CD8-positive, alpha-beta T cell (primary cell): ENCODE measurements at regions of chr19 and their contacts with region 1.

Region 1: GRCh38 chr19:58408152-58409009 is at the start of gene ZNF584:
- DNase-seq: peak; percentile 80 to 96 (median 93)
- ATAC-seq: peak; percentile 97
- H3K4me3 ChIP-seq: peak within 1 kb of the TSS; percentile 75 to 79
- H3K4me3 Mint-ChIP-seq: peak within 1 kb of the TSS; percentile 97
- H3K27ac ChIP-seq: peak within 1 kb of the TSS; percentile 67 to 85
- H3K27ac Mint-ChIP-seq: peak within 1 kb of the TSS; percentile 96
- H3K4me1 ChIP-seq: peaks cover 22% of the 10 kb centered on the region
- H3K4me1 Mint-ChIP-seq: peaks cover 33% of the 10 kb centered on the region
- H3K27me3 ChIP-seq: no peaks in the 10 kb centered on the region
- H3K27me3 Mint-ChIP-seq: no peaks in the 10 kb centered on the region
- CTCF ChIP-seq: no peak
- total RNA-seq, gene ZNF584: 1.2 to 1.7 TPM

Region 2: GRCh38 chr19:57914531-57914930 is 493.9 kb before region 1 on chr19:
- CTCF ChIA-PET with region 1: no interaction called
- POLR2A ChIA-PET with region 1: no interaction called
- intact Hi-C with region 1: loop called in 1 of 2 experiments (anchors 10 kb)
- DNase-seq: no peak
- ATAC-seq: no peak
- H3K4me3 ChIP-seq: no peak overlapping the region
- H3K4me3 Mint-ChIP-seq: peak overlapping the region; percentile 92
- H3K27ac ChIP-seq: no peak overlapping the region
- H3K27ac Mint-ChIP-seq: peak overlapping the region; percentile 49
- H3K4me1 ChIP-seq: peaks cover 12% of the 10 kb centered on the region
- H3K4me1 Mint-ChIP-seq: peaks cover 43% of the 10 kb centered on the region
- H3K27me3 ChIP-seq: no peaks in the 10 kb centered on the region
- H3K27me3 Mint-ChIP-seq: no peaks in the 10 kb centered on the region
- CTCF ChIP-seq: no peak

Region 3: DNA sequence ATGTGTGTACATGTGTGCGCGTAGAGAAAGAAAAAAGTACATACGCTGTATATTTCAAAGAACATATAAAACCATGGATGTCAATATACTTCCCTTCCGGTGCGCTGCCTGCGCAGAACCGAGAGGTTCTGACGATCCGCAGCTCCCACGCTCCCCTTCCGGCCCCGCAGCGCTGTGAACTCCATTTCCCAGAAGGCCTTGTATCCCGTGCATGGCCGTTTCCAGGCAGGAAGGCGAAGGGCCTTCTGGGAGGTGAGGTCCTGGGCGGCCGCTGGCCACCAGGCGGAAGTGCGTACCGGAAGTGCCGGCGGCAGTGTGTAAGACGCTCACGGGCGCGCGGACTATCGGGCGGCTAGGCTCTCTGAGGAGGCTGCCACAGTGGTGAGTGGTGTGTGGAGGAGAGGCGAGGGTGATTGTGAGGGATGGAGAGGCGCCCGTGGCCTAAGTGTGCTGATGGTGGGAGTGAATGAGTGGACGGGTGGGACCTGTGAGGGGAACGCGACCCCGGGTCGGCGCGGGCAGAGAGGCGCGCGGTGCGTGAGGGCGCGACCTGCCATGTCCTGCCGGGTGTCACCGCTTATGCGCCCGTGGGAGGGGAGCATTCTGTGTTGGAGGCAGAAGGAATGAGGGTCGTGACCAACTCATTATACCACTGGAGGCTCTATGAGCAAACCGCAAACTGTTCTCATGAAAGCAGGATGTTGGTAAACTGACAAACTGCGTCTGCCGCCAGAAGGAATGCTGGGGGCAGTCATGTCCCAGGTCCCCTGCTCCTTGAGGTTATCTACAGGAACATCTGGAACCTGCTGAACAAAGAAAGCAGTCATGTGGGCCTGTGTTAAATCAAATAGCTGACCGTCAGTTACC is 103.1 kb before region 1 on chr19 and contains the start of gene ERVK3-1:
- CTCF ChIA-PET with region 1: no interaction called
- POLR2A ChIA-PET with region 1: no interaction called
- intact Hi-C with region 1: loop called (anchors 1 kb)
- DNase-seq: peak; percentile 89 to 99 (median 93)
- ATAC-seq: peak; percentile 96
- H3K4me3 ChIP-seq: peak within 1 kb of the TSS; percentile 82 to 89
- H3K4me3 Mint-ChIP-seq: peak within 1 kb of the TSS; percentile 98
- H3K27ac ChIP-seq: peak within 1 kb of the TSS; percentile 93 to 95
- H3K27ac Mint-ChIP-seq: peak within 1 kb of the TSS; percentile 99
- H3K4me1 ChIP-seq: peaks cover 27% of the 10 kb centered on the region
- H3K4me1 Mint-ChIP-seq: peaks cover 53% of the 10 kb centered on the region
- H3K27me3 ChIP-seq: no peaks in the 10 kb centered on the region
- H3K27me3 Mint-ChIP-seq: no peaks in the 10 kb centered on the region
- CTCF ChIP-seq: no peak
- total RNA-seq, gene ERVK3-1: 174 to 182 TPM

Region 4: DNA sequence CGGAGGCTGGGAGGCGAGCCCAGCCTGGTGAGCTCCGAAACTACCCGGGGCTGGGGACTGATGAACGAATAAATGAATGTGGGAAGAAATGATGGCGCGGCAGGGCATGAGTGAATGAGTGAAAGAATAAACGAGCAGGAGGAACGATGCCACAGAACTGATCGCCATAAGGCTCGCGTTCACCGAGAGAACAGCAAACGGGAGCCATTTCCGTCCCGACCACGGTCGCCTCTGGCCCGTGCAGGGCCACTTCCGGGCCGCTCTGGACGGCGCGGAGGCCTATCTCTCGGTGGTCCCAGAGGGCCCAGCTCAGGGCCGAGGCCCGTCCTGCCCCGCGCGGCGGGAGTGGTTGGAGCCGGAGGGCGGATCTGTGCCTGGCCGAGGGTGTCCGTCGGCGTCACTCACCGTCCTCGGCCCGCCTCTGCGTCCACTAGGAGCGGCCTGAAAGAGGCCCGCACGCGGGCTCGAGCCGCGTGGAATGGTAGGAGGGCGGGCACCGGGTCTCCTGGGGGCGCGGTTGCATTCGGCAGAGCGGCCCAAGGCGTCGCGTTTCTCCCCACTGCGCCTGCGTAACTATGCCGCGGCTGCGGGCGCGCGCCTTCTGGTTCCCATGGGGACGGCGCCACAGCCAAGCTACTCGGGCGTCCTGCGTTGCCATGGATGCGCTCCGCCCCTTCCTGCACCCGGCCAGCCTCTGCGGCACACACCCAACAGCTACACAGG is 45.9 kb before region 1 on chr19 and contains the start of gene ZNF497:
- CTCF ChIA-PET with region 1: no interaction called
- POLR2A ChIA-PET with region 1: interaction called, 3 read pairs
- intact Hi-C with region 1: loop called (anchors 1 kb)
- DNase-seq: peak; percentile 95 to 99 (median 97)
- ATAC-seq: peak; percentile 86
- H3K4me3 ChIP-seq: peak within 1 kb of the TSS; percentile 71 to 78
- H3K4me3 Mint-ChIP-seq: peak within 1 kb of the TSS; percentile 95
- H3K27ac ChIP-seq: peak within 1 kb of the TSS; percentile 82 to 84
- H3K27ac Mint-ChIP-seq: peak within 1 kb of the TSS; percentile 92
- H3K4me1 ChIP-seq: peaks cover 18% of the 10 kb centered on the region
- H3K4me1 Mint-ChIP-seq: peaks cover 23% of the 10 kb centered on the region
- H3K27me3 ChIP-seq: no peaks in the 10 kb centered on the region
- H3K27me3 Mint-ChIP-seq: no peaks in the 10 kb centered on the region
- CTCF ChIP-seq: no peak
- total RNA-seq, gene ZNF497: 0.79 to 1.2 TPM

Region 5: DNA sequence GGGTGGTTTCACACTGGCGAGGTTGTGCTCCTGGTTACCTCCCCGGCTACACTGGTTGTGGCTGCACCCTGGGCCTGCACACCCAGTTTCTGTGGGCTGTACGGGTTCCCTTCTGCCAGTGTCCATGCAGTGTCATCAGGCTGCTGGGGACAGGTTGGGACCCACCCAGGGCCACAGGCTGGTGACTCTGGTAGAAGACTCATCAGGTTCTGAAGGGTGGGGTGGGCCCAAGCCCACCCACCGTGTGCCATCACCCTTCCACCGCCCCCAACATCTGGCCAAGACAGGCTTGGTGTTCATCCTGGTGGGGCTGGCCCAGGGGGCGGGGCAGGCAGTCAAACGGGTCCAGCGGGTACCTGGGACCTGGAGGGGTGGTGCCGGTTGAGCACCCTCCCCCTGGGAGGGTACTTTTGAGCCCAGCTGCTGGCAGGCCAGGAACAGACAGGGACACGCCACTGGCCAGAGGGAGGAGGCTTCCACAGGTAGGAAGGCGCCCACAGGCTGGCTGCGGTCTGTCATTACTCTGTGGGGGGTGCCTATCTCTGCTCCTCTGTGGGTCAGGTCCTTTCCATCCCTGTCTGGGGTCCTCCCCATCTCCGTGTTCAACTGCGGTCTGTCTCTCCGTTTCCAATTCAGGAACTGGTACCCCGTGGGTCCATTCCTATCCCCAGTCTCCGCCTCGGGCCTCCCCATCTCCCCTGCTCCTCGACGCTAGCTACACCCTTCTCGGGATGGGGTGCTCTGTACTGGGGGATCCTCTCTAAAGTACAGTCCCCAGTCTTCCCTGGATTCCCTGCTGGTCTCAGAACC is 13.0 kb before region 1 on chr19 and contains the start of gene RNF225:
- CTCF ChIA-PET with region 1: no interaction called
- POLR2A ChIA-PET with region 1: no interaction called
- intact Hi-C with region 1: no loop called
- DNase-seq: peak in 1 of 9 experiments; percentile 14
- ATAC-seq: no peak
- H3K4me3 ChIP-seq: no peak within 1 kb of the TSS
- H3K4me3 Mint-ChIP-seq: no peak within 1 kb of the TSS
- H3K27ac ChIP-seq: no peak within 1 kb of the TSS
- H3K27ac Mint-ChIP-seq: no peak within 1 kb of the TSS
- H3K4me1 ChIP-seq: peaks cover 4% of the 10 kb centered on the region
- H3K4me1 Mint-ChIP-seq: peaks cover 20% of the 10 kb centered on the region
- H3K27me3 ChIP-seq: peaks cover 4 to 5% of the 10 kb centered on the region in 2 experiments
- H3K27me3 Mint-ChIP-seq: peaks cover 10% of the 10 kb centered on the region
- CTCF ChIP-seq: no peak
- total RNA-seq, gene RNF225: 0.76 TPM in 1 of 2 experiments, not detected in the other

Region 6: DNA sequence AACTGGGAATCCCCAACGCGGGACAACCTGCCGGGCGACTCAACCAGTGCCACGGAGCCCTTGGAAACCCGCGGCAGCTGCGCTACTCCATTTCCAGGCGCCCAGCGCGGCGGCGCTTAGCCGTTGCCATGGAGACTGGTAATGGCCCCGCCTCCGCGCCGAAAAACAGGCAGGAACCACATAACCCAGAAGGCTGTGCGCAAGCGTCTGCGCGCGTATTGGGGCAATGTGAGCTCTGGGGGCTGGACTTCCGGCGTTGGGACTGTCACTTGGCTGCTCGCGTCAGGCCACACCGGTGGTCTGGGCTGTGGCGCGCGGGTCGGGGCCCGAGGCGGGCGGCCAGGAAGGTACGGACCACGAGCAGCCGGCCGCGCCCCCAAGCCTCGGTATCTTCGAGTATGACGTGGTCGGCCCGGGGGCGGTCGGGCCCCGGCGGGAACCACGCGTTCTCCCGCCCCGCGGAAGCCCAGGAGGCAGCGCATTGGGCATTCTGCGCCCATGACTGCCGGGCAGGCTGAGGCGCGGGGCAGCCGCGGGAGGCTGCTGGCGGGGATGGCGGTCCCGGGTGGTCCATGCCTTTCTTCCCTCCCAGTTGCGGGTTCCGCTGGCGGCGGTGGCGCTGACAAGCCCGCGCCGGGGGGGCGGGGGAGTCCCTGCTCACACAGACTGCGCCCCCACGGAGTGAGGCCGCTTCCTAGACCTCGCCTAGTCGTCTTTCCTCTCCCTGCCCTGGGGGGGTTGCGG is 43.1 kb after region 1 on chr19 and contains the start of gene ZNF324B:
- CTCF ChIA-PET with region 1: no interaction called
- POLR2A ChIA-PET with region 1: no interaction called
- intact Hi-C with region 1: loop called (anchors 1 kb)
- DNase-seq: peak; percentile 92 to 98 (median 96)
- ATAC-seq: peak; percentile 96
- H3K4me3 ChIP-seq: peak within 1 kb of the TSS; percentile 55 to 83
- H3K4me3 Mint-ChIP-seq: peak within 1 kb of the TSS; percentile 82
- H3K27ac ChIP-seq: peak within 1 kb of the TSS; percentile 44 to 70
- H3K27ac Mint-ChIP-seq: peak within 1 kb of the TSS; percentile 27
- H3K4me1 ChIP-seq: peaks cover 10% of the 10 kb centered on the region
- H3K4me1 Mint-ChIP-seq: peaks cover 16% of the 10 kb centered on the region
- H3K27me3 ChIP-seq: peaks cover 0 to 9% of the 10 kb centered on the region in 2 experiments
- H3K27me3 Mint-ChIP-seq: peaks cover 9% of the 10 kb centered on the region
- CTCF ChIP-seq: no peak
- total RNA-seq, gene ZNF324B: 6.2 to 6.5 TPM

Region 7: DNA sequence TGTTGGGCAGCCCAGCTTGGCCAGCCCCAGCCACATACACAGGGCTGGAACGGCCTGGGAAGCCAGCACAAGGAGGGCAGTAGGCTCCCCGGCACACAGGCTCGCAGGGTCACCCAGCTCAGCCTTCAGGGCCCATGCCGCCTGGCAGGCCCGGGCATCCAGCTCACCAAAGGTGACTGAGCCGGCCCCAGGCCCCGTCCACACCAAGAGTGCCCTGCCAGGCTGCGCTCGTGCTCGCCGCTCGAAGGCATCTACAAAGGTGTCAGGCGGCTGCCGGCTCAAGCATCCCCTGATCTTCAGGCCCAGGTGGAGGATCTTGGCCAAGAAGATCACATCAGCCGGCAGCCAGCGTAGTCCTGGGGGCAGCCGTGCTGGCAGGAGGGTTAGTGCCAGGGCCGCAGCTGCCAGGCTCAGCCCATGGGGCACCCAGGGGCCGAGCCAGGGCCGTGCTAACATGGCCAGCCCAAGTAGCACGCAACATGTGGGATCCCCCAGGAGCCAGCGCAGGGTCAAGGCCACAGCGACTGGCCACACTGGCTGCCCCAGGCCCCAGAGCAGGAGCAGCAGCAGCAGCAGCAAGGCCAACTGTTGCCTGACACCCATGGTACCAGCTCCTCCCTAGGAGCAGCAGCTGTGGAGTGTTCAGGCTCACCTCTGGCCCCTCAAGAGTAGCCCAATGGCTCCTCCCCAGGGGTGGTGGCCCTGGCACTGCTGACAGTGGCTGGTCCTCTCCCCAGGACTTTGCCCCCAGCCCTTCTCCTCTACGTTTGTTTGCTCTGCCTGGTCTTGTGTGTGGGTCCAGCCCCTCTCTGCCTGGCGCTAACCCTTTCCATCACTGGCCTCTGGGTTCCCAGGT is 103.2 kb after region 1 on chr19 and contains the start of gene SLC27A5:
- CTCF ChIA-PET with region 1: no interaction called
- POLR2A ChIA-PET with region 1: no interaction called
- intact Hi-C with region 1: no loop called
- DNase-seq: peak in 1 of 9 experiments; percentile 5
- ATAC-seq: no peak
- H3K4me3 ChIP-seq: no peak within 1 kb of the TSS
- H3K4me3 Mint-ChIP-seq: no peak within 1 kb of the TSS
- H3K27ac ChIP-seq: no peak within 1 kb of the TSS
- H3K27ac Mint-ChIP-seq: no peak within 1 kb of the TSS
- H3K4me1 ChIP-seq: peaks cover 15% of the 10 kb centered on the region
- H3K4me1 Mint-ChIP-seq: peaks cover 22% of the 10 kb centered on the region
- H3K27me3 ChIP-seq: no peaks in the 10 kb centered on the region
- H3K27me3 Mint-ChIP-seq: no peaks in the 10 kb centered on the region
- CTCF ChIP-seq: no peak
- total RNA-seq, gene SLC27A5: 5.5 to 7.9 TPM

Region 8: DNA sequence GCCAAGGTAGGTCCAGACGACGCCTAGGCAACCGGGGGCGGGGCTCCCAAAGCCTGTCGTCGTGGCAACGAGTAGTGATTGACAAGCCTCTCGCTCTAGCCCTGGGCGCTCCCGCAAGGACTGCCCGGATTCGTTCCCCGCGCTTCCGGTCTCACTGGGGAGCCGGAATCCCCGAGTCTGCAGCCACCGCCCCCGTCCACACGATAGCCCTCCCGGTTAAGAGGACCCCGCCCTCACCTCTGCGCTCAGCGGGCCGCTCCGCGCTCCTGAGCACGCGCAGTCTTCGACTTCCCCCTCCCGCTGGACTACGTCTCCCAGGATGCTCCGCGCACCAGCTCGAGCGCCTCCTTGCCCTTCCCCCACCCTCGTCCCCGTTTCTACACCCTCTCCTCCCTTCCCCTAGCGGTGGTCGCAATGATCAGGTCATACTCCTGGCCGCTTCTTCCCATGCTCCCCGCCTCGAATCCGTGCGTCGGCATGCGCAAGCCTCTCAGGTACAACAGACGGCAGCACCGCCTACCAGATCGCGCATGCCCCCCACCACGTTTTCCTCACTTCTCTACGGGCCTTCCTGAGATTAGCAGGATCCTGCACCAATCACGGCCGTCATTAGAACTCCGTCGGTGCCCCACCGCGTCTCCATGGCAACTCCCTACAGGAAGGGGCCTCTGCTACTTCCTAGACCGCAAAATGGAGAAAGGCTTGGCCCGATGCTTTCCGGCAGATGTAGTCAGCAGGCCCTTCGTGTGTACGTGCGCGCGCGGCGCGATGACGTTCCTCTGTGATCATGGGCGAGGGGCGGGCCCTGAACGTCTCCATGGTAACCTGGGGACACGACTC is 164.7 kb after region 1 on chr19 and contains the start of gene MZF1:
- CTCF ChIA-PET with region 1: no interaction called
- POLR2A ChIA-PET with region 1: no interaction called
- intact Hi-C with region 1: loop called in 1 of 2 experiments (anchors 1 kb)
- DNase-seq: peak; percentile 99 to 100 (median 99)
- ATAC-seq: peak; percentile 70
- H3K4me3 ChIP-seq: peak within 1 kb of the TSS; percentile 83 to 84
- H3K4me3 Mint-ChIP-seq: peak within 1 kb of the TSS; percentile 98
- H3K27ac ChIP-seq: peak within 1 kb of the TSS; percentile 98 to 100
- H3K27ac Mint-ChIP-seq: peak within 1 kb of the TSS; percentile 99
- H3K4me1 ChIP-seq: peaks cover 22% of the 10 kb centered on the region
- H3K4me1 Mint-ChIP-seq: peaks cover 30% of the 10 kb centered on the region
- H3K27me3 ChIP-seq: no peaks in the 10 kb centered on the region
- H3K27me3 Mint-ChIP-seq: no peaks in the 10 kb centered on the region
- CTCF ChIP-seq: no peak
- total RNA-seq, gene MZF1: 14.1 to 15.0 TPM